GM10248 (cell line): ENCODE measurements at regions of chr9 and their contacts with region 1.

Region 1: GRCh38 chr9:72333709-72334108 is 31.3 kb downstream of the ZFAND5 start:
- DNase-seq: no peak
- CTCF ChIP-seq: peak; percentile 13

Region 2: DNA sequence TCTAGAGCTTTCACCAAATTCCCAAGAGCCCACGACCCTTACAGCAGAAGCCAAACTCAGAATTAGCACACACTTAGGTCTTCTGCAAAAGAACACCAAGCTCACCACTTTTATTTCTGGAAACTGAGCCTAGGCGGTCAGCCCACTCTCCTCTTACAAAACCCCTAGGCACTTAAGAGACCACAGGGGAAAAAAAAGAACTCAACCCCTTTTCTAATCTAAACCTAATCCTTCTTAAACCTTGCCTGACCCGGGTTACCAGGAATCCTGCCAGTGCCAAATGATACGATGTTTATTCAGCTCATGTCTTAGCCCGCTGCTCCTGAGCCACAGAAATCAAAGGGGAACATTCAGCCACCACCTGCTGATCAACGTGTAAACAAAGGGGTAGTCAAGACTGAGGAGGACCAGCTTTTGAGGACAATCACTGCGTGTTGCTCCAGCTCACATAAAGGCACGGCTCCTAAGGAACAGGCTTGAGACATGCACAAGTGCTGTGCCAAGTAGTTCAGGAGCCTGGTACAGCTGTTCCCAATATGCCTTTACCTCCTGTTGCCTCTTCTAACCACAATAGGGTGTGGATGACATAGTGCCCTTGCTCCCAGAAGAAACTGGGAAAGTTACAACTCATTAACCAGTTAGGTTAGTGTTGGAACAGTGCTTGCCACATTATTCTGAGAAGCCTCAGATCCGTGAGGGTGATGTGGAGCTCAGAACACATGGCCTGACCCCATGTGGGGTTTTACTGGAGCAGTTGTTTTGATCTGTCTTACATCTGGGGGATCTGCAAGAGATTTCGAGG is 18.0 kb before region 1 on chr9:
- CTCF ChIA-PET with region 1: interaction called, 10 read pairs
- POLR2A ChIA-PET with region 1: no interaction called
- DNase-seq: no peak
- CTCF ChIP-seq: no peak